K562 (cell line): ENCODE measurements at regions of chr22 and their contacts with region 1.

Region 1: GRCh38 chr22:17284888-17285287 is 65.7 kb upstream of the ADA2 start:
- DNase-seq: no peak
- ATAC-seq: no peak
- H3K4me3 ChIP-seq: no peak overlapping the region
- H3K27ac ChIP-seq: no peak overlapping the region
- H3K4me1 ChIP-seq: no peaks in the 10 kb centered on the region
- H3K27me3 ChIP-seq: peaks cover 14 to 35% of the 10 kb centered on the region in 2 experiments
- CTCF ChIP-seq: no peak
- EP300 ChIP-seq: no peak
- POLR2A ChIP-seq: no peak
- RAD21 ChIP-seq: no peak

Region 2: GRCh38 chr22:17303441-17303839 is 18.6 kb after region 1 on chr22:
- CTCF ChIA-PET with region 1: no interaction called
- POLR2A ChIA-PET with region 1: interaction called, 5 read pairs
- in situ Hi-C with region 1: no loop called
- intact Hi-C with region 1: loop called (anchors 1 kb)
- DNase-seq: peak in 1 of 4 experiments; percentile 4
- ATAC-seq: peak; percentile 17; the same call in 2 of the 3 replicates
- H3K4me3 ChIP-seq: no peak overlapping the region
- H3K27ac ChIP-seq: no peak overlapping the region
- H3K4me1 ChIP-seq: no peaks in the 10 kb centered on the region
- H3K27me3 ChIP-seq: peaks cover 12 to 18% of the 10 kb centered on the region in 2 experiments; a peak in 4 of 5 replicates
- CTCF ChIP-seq: no peak
- EP300 ChIP-seq: no peak
- POLR2A ChIP-seq: no peak
- RAD21 ChIP-seq: no peak